CD8-positive, alpha-beta T cell (primary cell): ENCODE measurements at regions of chr7 and their contacts with region 1.

Region 1: DNA sequence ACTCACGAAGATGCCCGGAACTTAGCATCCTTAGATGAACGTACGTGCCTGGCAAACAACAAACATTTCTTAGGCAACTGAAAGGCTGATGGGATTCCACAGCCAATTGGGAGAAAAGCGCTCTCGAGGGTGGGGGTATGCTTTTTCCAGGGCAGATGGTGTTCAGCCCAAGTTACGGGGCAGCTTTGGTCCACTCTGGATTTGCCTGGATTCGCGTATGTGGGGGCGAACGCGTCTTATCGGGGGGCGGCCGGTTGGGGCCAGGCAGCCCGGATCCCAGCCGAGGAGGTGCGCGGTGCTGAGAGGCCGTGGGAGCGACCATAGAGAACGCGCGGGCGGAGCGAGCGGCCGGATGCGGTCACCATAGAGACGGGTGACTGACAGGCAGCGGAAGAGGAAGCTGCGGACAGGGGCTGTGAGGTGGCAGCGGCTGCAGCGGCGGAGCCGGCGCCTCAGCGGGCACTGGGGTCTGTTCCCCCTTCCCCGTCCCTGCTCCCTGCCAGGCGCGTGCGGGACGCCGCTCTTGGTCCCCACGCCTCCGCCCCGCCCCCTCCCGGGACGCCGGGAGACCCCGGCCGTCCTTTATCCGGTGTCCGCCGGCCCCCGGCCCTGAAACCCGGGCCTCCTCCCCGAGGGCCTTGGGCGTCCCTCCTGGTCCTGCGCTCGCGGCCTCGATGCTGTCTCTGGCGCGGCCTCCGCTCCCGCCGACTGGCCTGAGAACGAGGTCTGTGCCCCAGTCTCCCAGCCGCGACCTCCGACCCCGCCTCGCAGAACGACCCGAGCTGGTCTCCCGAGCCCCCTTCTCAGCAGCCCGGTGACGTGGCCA is at the start of gene CHPF2:
- DNase-seq: peak; percentile 71 to 94 (median 92)
- ATAC-seq: peak; percentile 74
- H3K4me3 ChIP-seq: peak within 1 kb of the TSS; percentile 76 to 96
- H3K4me3 Mint-ChIP-seq: peak within 1 kb of the TSS; percentile 100
- H3K27ac ChIP-seq: peak within 1 kb of the TSS; percentile 54 to 59
- H3K27ac Mint-ChIP-seq: peak within 1 kb of the TSS; percentile 98
- H3K4me1 ChIP-seq: peaks cover 22% of the 10 kb centered on the region
- H3K4me1 Mint-ChIP-seq: peaks cover 35% of the 10 kb centered on the region
- H3K27me3 ChIP-seq: no peaks in the 10 kb centered on the region
- H3K27me3 Mint-ChIP-seq: no peaks in the 10 kb centered on the region
- CTCF ChIP-seq: no peak
- total RNA-seq, gene CHPF2: 24.7 to 24.9 TPM

Region 2: DNA sequence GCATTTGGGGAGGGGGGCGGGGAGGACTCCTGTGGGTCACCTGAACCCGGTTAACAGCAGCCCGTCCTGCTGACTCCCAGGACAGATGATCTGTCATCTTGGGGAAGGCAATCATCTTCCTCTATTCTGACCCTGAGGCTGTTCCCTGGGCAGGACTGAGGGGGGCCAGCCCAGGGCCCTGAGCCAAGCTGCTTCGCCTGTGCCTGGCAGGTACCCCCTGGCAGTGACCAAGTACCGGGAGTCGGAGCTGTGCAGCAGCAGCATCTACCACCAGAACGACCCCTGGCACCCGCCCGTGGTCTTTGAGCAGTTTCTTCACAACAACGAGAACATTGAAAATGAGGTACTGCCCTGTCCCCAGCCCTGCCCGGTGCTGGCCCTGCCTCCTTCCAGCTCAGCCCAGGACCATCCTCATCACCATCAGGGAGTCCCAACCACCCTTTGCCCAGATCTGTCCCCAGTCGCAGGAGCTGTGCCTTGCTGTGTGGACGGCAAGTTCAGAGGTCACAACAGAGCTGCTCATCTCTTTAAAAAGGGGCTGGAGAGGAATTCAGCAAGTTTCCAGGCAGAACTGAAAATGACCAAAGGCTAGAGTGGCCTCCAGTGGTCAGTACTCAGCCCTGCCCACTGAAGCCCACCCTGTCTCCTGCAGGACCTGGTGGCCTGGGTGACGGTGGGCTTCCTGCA is 371.9 kb before region 1 on chr7:
- CTCF ChIA-PET with region 1: no interaction called
- POLR2A ChIA-PET with region 1: no interaction called
- intact Hi-C with region 1: no loop called
- DNase-seq: peak in 2 of 9 experiments; percentile 5 to 41
- ATAC-seq: no peak
- H3K4me3 ChIP-seq: no peak overlapping the region
- H3K4me3 Mint-ChIP-seq: no peak overlapping the region
- H3K27ac ChIP-seq: no peak overlapping the region
- H3K27ac Mint-ChIP-seq: no peak overlapping the region
- H3K4me1 ChIP-seq: no peaks in the 10 kb centered on the region
- H3K4me1 Mint-ChIP-seq: no peaks in the 10 kb centered on the region
- H3K27me3 ChIP-seq: no peaks in the 10 kb centered on the region
- H3K27me3 Mint-ChIP-seq: peaks cover 14% of the 10 kb centered on the region
- CTCF ChIP-seq: no peak

Region 3: GRCh38 chr7:151104411-151105235 is 127.7 kb before region 1 on chr7:
- CTCF ChIA-PET with region 1: no interaction called
- POLR2A ChIA-PET with region 1: no interaction called
- intact Hi-C with region 1: no loop called
- DNase-seq: peak in 1 of 9 experiments; percentile 2
- ATAC-seq: no peak
- H3K4me3 ChIP-seq: no peak overlapping the region
- H3K4me3 Mint-ChIP-seq: no peak overlapping the region
- H3K27ac ChIP-seq: no peak overlapping the region
- H3K27ac Mint-ChIP-seq: no peak overlapping the region
- H3K4me1 ChIP-seq: no peaks in the 10 kb centered on the region
- H3K4me1 Mint-ChIP-seq: no peaks in the 10 kb centered on the region
- H3K27me3 ChIP-seq: no peaks in the 10 kb centered on the region
- H3K27me3 Mint-ChIP-seq: no peaks in the 10 kb centered on the region
- CTCF ChIP-seq: no peak

Region 4: DNA sequence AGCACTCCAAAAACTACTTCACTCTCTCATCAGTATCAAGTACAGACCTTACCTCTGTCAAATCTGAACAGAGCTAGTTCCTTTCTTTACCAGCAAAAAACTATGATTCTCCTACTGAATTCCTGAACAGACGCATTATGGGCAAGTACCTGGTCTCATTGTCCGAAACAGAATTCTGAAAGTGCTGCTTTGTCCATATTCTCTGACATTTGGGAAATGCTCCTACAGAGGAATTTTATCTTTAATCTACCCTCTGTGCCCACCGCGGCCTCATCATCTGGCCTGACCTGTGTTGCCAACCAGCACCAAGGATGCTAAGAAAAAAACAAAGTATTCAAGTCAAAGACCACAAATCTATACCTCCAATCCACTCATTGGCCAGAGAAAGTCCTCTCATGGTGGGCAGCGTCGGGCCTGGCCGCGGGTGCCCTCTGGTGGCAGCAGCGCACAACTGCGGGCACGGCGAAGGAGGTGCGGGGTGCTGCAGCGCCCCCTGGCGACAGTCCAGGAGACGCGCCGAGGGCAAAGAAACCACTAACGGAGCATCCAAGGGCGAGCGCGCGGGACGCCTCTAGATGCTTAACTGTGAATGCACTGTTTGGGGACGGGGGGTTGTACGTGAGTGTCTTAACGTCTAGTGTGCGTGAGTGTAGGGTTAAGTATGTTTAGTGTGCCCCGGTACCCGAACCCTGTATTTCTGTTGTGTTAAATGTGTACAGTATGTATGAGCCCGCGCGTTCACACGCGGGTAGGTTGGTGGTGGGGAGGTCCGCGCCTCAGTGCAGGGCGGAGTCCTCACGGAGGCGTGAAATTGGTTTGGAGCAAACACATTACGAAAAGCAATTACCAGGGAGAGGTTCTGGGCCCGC is 59.8 kb before region 1 on chr7:
- CTCF ChIA-PET with region 1: no interaction called
- POLR2A ChIA-PET with region 1: no interaction called
- intact Hi-C with region 1: loop called in 1 of 2 experiments (anchors 1 kb)
- DNase-seq: peak; percentile 52 to 88 (median 78)
- ATAC-seq: peak; percentile 87
- H3K4me3 ChIP-seq: no peak overlapping the region
- H3K4me3 Mint-ChIP-seq: no peak overlapping the region
- H3K27ac ChIP-seq: no peak overlapping the region
- H3K27ac Mint-ChIP-seq: no peak overlapping the region
- H3K4me1 ChIP-seq: peaks cover 5% of the 10 kb centered on the region
- H3K4me1 Mint-ChIP-seq: peaks cover 10% of the 10 kb centered on the region
- H3K27me3 ChIP-seq: peaks cover 0 to 12% of the 10 kb centered on the region in 2 experiments
- H3K27me3 Mint-ChIP-seq: peaks cover 62% of the 10 kb centered on the region
- CTCF ChIP-seq: peak; percentile 100

Region 5: DNA sequence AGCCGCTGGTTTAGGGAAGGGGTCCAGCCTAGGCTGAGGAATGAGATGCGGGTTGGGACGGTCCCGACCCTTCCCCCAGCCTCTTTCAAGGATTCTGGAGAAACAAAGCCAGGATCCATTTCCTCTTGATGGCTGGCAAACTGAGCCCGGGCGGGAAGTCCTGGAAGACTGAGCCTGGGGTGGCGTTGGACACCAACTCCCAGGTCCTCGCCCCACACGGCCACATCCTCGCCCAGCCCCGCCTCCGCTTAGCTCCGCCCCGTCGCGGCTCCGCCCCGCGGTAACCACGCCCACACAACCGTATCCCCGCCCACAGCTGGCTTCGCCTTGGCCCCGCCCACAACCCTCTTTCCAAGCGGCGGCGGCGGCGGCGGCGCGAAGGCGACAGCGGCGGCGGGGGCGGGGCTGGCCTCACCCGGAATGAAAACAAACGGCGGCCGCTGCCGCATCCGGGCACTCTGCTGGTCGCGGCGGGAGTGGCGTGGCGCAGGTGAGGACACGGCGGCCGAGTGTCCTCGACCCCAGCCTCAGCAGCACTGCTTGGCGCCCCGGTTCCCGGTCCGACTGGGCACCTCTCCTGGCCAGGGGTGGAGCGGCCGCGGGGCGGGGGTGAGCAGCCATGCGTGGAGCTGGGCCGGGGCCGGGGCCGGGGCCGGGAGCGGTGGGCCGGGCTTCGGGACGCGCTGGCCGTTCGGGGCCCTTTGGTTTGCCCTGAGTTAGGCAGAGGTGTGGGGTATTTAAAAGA is 109.2 kb after region 1 on chr7 and contains the start of gene NUB1:
- CTCF ChIA-PET with region 1: no interaction called
- POLR2A ChIA-PET with region 1: interaction called, 5 read pairs
- intact Hi-C with region 1: loop called (anchors 2 to 5 kb)
- DNase-seq: peak; percentile 83 to 98 (median 92)
- ATAC-seq: peak; percentile 91
- H3K4me3 ChIP-seq: peak within 1 kb of the TSS; percentile 68 to 82
- H3K4me3 Mint-ChIP-seq: peak within 1 kb of the TSS; percentile 88
- H3K27ac ChIP-seq: peak within 1 kb of the TSS; percentile 72 to 75
- H3K27ac Mint-ChIP-seq: peak within 1 kb of the TSS; percentile 92
- H3K4me1 ChIP-seq: peaks cover 23% of the 10 kb centered on the region
- H3K4me1 Mint-ChIP-seq: peaks cover 35% of the 10 kb centered on the region
- H3K27me3 ChIP-seq: no peaks in the 10 kb centered on the region
- H3K27me3 Mint-ChIP-seq: no peaks in the 10 kb centered on the region
- CTCF ChIP-seq: no peak
- total RNA-seq, gene NUB1: 78.4 to 81.2 TPM

Region 6: GRCh38 chr7:151519765-151520418 is 287.6 kb after region 1 on chr7 and contains the start of gene RHEB:
- CTCF ChIA-PET with region 1: no interaction called
- POLR2A ChIA-PET with region 1: no interaction called
- intact Hi-C with region 1: loop called in 1 of 2 experiments (anchors 2 kb)
- DNase-seq: peak; percentile 94 to 99 (median 98)
- ATAC-seq: peak; percentile 82
- H3K4me3 ChIP-seq: peak within 1 kb of the TSS; percentile 65 to 73
- H3K4me3 Mint-ChIP-seq: peak within 1 kb of the TSS; percentile 84
- H3K27ac ChIP-seq: peak within 1 kb of the TSS; percentile 85 to 86
- H3K27ac Mint-ChIP-seq: peak within 1 kb of the TSS; percentile 94
- H3K4me1 ChIP-seq: peaks cover 34% of the 10 kb centered on the region
- H3K4me1 Mint-ChIP-seq: peaks cover 41% of the 10 kb centered on the region
- H3K27me3 ChIP-seq: no peaks in the 10 kb centered on the region
- H3K27me3 Mint-ChIP-seq: no peaks in the 10 kb centered on the region
- CTCF ChIP-seq: no peak
- total RNA-seq, gene RHEB: 57.2 to 61.0 TPM